Panc1 (cell line): ENCODE measurements at regions of chr10 and their contacts with region 1.

Region 1: DNA sequence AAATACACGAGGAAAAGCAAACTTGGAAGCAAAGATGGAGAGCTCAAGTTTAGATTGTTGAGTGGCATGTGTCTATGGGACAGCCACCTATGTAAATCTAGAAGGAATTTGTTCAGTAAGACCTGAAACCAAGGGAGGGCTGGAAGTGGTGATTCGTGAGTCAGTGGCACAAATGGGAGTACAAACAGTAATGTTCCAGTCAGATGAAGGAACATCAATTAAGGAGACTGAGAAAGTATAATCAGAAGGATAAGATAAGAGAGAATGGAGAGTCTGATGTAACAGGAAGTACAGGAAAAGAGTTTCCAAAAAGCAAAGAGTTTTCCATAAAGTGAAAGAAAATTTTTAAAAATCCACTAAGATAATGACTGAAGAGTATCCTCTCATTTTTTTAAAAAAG is 544.2 kb downstream of the KIF20B start:
- DNase-seq: no peak
- ATAC-seq: no peak
- H3K4me3 ChIP-seq: no peak overlapping the region
- H3K27ac ChIP-seq: no peak overlapping the region
- H3K4me1 ChIP-seq: no peaks in the 10 kb centered on the region
- H3K27me3 ChIP-seq: no peaks in the 10 kb centered on the region
- CTCF ChIP-seq: no peak

Region 2: DNA sequence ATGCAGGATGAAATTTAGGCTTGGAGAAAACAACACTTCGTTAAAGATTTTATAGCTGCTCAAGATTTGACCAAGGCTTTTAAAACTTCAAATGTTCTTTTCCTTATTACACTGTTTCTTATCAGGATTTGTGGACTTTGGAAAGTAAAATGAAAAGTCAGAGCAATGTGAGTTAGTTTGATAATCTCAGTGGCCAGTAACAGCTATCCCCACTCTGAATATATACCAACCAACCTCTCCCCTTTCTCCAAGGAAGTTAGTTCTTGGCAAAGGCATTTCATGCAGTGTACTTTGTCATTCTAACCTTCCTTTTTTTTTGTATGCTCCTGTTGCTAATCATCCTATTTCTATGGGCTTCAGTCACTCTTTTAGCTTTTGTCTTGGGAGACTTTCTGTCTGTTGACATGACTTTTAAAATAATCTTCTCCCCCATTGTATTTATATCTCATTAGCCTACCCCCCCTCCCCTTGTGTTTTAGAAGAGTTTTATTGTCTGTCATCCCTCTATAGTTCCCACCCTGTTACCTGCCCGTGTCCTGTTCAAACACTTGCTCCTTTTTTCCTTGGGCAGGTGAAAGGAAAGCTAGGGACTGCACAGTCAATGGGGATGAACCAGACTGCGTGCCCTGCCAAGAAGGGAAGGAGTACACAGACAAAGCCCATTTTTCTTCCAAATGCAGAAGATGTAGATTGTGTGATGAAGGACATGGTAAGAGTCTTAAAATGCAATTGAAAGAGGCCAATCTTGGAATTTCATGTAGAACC is 1238.3 kb before region 1 on chr10:
- CTCF ChIA-PET with region 1: no interaction called
- POLR2A ChIA-PET with region 1: interaction called, 14 read pairs
- in situ Hi-C with region 1: no loop called
- intact Hi-C with region 1: no loop called
- DNase-seq: no peak
- ATAC-seq: no peak
- H3K4me3 ChIP-seq: no peak overlapping the region
- H3K27ac ChIP-seq: no peak overlapping the region
- H3K4me1 ChIP-seq: no peaks in the 10 kb centered on the region
- H3K27me3 ChIP-seq: no peaks in the 10 kb centered on the region
- CTCF ChIP-seq: no peak

Region 3: GRCh38 chr10:90079819-90080218 is 165.8 kb before region 1 on chr10:
- CTCF ChIA-PET with region 1: no interaction called
- POLR2A ChIA-PET with region 1: no interaction called
- in situ Hi-C with region 1: no loop called
- intact Hi-C with region 1: no loop called
- DNase-seq: no peak
- ATAC-seq: no peak
- H3K4me3 ChIP-seq: no peak overlapping the region
- H3K27ac ChIP-seq: no peak overlapping the region
- H3K4me1 ChIP-seq: no peaks in the 10 kb centered on the region
- H3K27me3 ChIP-seq: no peaks in the 10 kb centered on the region
- CTCF ChIP-seq: no peak

Region 4: DNA sequence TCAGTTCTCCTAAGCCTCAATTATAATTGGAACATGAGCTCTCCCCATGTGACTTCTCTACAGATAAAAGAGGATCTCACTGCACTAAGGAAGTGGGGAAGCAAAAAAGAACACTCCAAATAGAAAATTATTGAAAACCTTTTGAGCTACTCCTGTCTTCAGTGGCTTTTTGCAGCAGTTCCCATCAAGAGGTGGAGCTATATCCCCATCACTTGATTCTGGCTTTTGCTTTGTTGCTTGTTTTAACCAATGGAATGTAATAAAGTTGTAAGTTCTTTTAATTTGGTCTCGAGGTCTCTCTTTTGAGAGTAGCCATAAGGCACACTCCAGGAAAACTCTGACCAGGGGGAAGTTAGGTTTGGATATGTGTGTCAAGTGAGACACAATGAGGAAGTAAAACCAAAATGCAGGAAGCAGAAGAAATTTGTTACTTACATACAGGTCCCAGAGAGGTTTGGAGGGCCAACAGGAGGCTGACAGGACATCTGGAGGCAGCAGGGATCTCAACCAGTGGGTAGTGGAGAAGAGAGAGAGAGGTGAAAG is 42.8 kb after region 1 on chr10:
- CTCF ChIA-PET with region 1: no interaction called
- POLR2A ChIA-PET with region 1: no interaction called
- in situ Hi-C with region 1: no loop called
- intact Hi-C with region 1: no loop called
- DNase-seq: peak; percentile 43
- ATAC-seq: no peak
- H3K4me3 ChIP-seq: no peak overlapping the region
- H3K27ac ChIP-seq: no peak overlapping the region
- H3K4me1 ChIP-seq: no peaks in the 10 kb centered on the region
- H3K27me3 ChIP-seq: no peaks in the 10 kb centered on the region
- CTCF ChIP-seq: peak; percentile 38